Mammary epithelial cell (primary cell): ENCODE measurements at regions of chr1 and their contacts with region 1.

Region 1: GRCh38 chr1:246497331-246497915 is 9.7 kb downstream of the SMYD3 start:
- DNase-seq: peak; percentile 52
- H3K4me3 ChIP-seq: no peak overlapping the region
- H3K27ac ChIP-seq: no peak overlapping the region
- H3K4me1 ChIP-seq: peaks cover under 1% of the 10 kb centered on the region
- H3K27me3 ChIP-seq: no peaks in the 10 kb centered on the region
- CTCF ChIP-seq: peak; percentile 66 to 68

Region 2: DNA sequence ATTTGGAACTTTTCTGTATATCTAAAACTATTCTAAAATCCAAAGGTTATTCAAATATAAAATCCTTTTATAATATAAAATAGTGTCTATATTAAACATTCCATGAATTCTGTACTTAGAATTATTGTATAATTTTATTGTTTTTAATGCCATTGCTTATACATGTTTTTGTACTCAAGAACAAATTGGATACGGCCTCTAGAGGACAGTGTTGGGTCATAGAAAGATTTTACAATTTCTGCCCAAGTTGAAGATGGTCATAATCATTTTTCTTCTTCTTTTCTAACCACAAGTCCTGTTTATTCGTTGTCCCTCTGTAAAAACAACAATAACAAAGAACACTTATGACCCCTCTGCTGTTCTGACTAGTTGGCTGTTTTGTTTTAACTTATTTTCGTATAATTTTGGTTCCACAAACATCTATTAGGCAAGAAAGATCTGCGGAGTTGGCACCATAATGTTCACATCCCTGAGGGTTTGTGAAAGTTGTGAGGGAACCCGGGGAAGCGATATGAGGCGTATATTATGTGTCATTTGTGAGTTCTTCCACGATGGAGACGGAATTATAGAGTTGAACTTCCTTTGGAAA is 1418.3 kb before region 1 on chr1:
- CTCF ChIA-PET with region 1: no interaction called
- dilution Hi-C with region 1: no loop called
- in situ Hi-C with region 1: no loop called
- intact Hi-C with region 1: loop called (anchors 1 kb)
- DNase-seq: peak; percentile 26
- H3K4me3 ChIP-seq: no peak overlapping the region
- H3K27ac ChIP-seq: no peak overlapping the region
- H3K4me1 ChIP-seq: no peaks in the 10 kb centered on the region
- H3K27me3 ChIP-seq: no peaks in the 10 kb centered on the region
- CTCF ChIP-seq: peak; percentile 81 to 90

Region 3: DNA sequence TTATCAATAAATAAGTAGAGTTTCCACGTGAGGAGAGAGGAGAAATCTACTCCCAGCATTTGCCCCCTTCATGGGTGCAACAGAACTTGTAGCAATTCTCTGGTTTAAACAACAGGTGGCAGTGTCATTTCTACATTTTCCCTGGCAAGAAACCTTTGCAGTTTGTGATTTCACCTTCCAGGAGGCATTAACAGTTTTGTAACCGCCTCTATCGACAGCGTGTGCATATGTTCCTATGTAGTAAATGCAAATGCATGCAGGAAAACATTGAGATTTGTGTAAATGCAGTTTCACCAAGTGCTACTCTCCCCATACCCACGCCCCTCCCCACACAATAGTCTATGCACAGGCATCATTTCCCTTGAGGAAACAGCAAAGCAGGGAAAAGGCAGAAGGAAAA is 485.1 kb before region 1 on chr1:
- CTCF ChIA-PET with region 1: no interaction called
- dilution Hi-C with region 1: no loop called
- in situ Hi-C with region 1: no loop called
- intact Hi-C with region 1: loop called (anchors 2 kb)
- DNase-seq: peak; percentile 16
- H3K4me3 ChIP-seq: no peak overlapping the region
- H3K27ac ChIP-seq: no peak overlapping the region
- H3K4me1 ChIP-seq: peaks cover 6% of the 10 kb centered on the region
- H3K27me3 ChIP-seq: no peaks in the 10 kb centered on the region
- CTCF ChIP-seq: peak; percentile 44 to 71

Region 4: GRCh38 chr1:246566128-246566812 is 68.8 kb after region 1 on chr1 and contains the starts of genes CNST and TFB2M:
- CTCF ChIA-PET with region 1: no interaction called
- dilution Hi-C with region 1: no loop called
- in situ Hi-C with region 1: no loop called
- intact Hi-C with region 1: loop called (anchors 2 kb)
- DNase-seq: peak; percentile 99
- H3K4me3 ChIP-seq: peak within 1 kb of the TSS; percentile 76 to 99 (median 99)
- H3K27ac ChIP-seq: peak within 1 kb of the TSS; percentile 70
- H3K4me1 ChIP-seq: peaks cover 8% of the 10 kb centered on the region
- H3K27me3 ChIP-seq: no peaks in the 10 kb centered on the region
- CTCF ChIP-seq: no peak
- total RNA-seq, gene CNST: 12.0 to 14.9 TPM
- total RNA-seq, gene TFB2M: 13.8 to 16.0 TPM

Region 5: DNA sequence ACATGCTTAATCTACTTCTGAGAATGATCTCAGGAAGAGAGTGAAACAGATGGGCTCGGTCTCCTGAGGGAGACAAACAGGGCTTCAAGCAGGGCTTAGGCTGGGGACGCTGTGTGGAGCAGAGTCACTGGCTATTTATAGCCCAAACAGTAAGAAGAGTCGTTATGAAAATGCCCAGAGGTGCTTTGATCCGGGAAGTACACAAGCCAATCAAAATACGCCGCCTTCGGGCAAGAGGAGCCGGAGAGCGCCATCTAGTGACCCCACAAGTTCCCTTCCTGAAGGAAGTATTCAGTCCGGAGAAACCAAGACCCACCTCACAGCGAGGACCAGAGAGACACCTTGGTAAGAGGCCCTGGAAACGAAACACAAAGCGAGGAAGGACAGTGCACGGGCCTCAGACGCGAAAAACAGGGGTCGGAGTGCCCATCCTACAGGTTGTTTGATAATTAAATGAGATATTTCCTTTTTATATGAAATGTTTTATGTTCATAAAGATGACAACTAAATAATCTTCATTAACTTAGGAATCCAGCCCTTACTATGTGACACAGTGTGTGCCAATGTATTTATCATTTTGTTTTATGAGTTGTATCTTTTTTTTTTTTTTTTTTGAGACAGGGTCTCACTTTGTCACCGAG is 201.8 kb after region 1 on chr1:
- CTCF ChIA-PET with region 1: no interaction called
- dilution Hi-C with region 1: no loop called
- in situ Hi-C with region 1: loop called (anchors 5 kb)
- intact Hi-C with region 1: loop called (anchors 1 kb)
- DNase-seq: peak; percentile 75
- H3K4me3 ChIP-seq: no peak overlapping the region
- H3K27ac ChIP-seq: no peak overlapping the region
- H3K4me1 ChIP-seq: no peaks in the 10 kb centered on the region
- H3K27me3 ChIP-seq: no peaks in the 10 kb centered on the region
- CTCF ChIP-seq: peak; percentile 63 to 87

Region 6: DNA sequence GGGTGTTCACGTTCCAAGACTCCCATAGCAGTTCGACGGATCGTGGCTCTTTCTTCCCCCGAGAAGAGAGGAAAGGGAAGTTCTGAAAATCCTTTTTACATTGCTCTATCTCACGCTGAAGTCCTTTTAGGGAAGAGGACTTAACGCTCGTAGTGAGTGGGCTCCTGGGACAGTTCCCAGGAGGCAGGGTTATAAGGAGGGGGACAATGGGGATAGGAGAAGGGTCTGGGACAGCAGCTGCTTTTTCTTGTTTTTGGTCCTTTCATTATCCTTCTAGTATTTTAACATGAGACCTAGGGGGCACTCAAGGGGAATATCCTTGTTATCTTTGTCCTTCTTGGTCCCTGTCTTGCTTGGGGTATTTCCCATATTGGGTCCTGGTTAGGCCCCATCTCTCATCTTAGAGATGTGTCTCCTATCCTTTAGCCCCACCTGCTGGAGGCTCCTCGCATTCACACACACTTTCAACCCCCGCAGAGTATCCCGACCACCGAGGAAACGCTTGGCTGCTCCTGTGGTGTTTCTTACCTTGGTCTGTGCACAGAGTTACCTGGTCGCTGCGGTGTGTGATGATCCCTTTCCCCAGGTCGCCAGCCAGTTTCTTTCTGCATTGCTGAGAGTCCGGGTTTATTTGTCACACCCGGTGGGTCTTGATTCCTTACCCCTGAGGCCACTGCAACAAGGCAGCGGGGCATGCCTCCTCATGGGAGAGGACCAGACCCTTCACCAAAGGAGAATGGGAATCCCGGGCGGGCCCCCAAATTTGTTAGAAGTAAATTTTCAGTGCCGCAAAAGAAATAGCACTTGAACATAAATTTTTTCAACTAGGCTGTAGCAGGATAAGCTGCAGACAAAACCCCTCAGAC is 256.5 kb after region 1 on chr1:
- CTCF ChIA-PET with region 1: no interaction called
- dilution Hi-C with region 1: no loop called
- in situ Hi-C with region 1: loop called (anchors 5 to 10 kb)
- intact Hi-C with region 1: loop called (anchors 1 kb)
- DNase-seq: peak; percentile 34
- H3K4me3 ChIP-seq: peak overlapping the region in 1 of 3 experiments; percentile 18
- H3K27ac ChIP-seq: no peak overlapping the region
- H3K4me1 ChIP-seq: no peaks in the 10 kb centered on the region
- H3K27me3 ChIP-seq: no peaks in the 10 kb centered on the region
- CTCF ChIP-seq: peak; percentile 67 to 90